Activated CD8-positive, alpha-beta T cell treated with anti-CD3 and anti-CD28 coated beads for 36 hours (primary cell): ENCODE measurements at regions of chr1 and their contacts with region 1.

Region 1: GRCh38 chr1:206982216-206982615 is 12.0 kb upstream of the FCAMR start:
- DNase-seq: peak; percentile 79
- ATAC-seq: peak; percentile 82
- H3K4me3 Mint-ChIP-seq: no peak overlapping the region
- H3K27ac Mint-ChIP-seq: no peak overlapping the region
- H3K4me1 Mint-ChIP-seq: no peaks in the 10 kb centered on the region
- H3K27me3 Mint-ChIP-seq: peaks cover 5% of the 10 kb centered on the region
- CTCF ChIP-seq: peak; percentile 78

Region 2: DNA sequence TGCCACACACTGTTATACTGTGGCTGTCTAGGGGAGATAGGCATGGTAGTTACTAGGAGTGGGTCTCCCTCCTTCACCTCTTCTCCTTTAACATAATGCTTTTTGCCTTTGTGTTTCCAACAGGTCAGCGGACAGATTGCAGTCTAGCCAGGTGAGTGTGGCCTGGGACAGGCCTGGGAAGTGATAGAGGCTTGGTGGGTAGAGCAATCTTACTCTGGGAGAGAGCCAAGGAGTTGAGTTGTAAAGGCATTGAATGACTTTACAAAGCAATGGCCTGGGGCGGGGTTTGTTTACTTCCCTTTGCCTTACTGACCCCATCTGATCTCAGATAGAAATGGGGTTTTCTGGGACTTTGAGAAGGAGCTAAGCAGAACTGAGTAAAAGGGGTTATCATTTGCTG is 563.0 kb before region 1 on chr1:
- CTCF ChIA-PET with region 1: no interaction called
- POLR2A ChIA-PET with region 1: no interaction called
- intact Hi-C with region 1: no loop called
- DNase-seq: no peak
- ATAC-seq: no peak
- H3K4me3 Mint-ChIP-seq: no peak overlapping the region
- H3K27ac Mint-ChIP-seq: no peak overlapping the region
- H3K4me1 Mint-ChIP-seq: no peaks in the 10 kb centered on the region
- H3K27me3 Mint-ChIP-seq: no peaks in the 10 kb centered on the region
- CTCF ChIP-seq: no peak

Region 3: GRCh38 chr1:206635080-206635977 is 346.9 kb before region 1 on chr1 and contains the start of gene DYRK3:
- CTCF ChIA-PET with region 1: interaction called, 15 read pairs
- POLR2A ChIA-PET with region 1: interaction called, 4 read pairs
- intact Hi-C with region 1: no loop called
- DNase-seq: peak; percentile 93
- ATAC-seq: peak; percentile 93
- H3K4me3 Mint-ChIP-seq: peak within 1 kb of the TSS; percentile 78
- H3K27ac Mint-ChIP-seq: peak within 1 kb of the TSS; percentile 88
- H3K4me1 Mint-ChIP-seq: peaks cover 25% of the 10 kb centered on the region
- H3K27me3 Mint-ChIP-seq: peaks cover 28% of the 10 kb centered on the region
- CTCF ChIP-seq: no peak
- total RNA-seq, gene DYRK3: 4.7 to 4.9 TPM

Region 4: DNA sequence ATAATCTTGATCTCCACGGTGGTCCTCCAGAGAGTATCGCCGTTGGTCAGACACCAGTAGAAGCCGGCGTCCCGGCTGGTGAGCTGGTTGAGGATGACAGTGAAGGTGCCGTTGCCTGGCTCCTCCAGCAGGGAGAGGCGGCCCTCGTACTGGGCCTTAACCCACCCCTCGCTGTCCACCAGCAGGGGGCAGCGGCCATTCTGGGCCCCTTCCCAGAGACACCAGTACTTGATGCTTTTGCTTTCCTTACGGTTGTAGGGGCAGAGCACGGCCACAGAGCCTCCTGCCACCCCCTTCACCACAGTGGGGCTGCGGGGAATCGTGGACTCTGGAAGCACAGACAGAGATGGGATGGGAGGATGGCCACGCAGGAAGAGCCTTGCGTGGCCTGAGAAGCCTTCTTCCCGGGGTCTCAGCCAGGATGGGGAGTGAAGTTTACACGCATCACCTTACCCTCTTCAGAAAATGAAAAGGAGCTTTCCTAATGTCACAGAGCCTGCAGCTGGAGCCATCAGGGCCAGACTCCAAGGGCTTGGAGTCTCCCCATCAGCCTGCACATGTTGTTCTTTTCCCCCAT is 46.6 kb before region 1 on chr1:
- CTCF ChIA-PET with region 1: interaction called, 182 read pairs
- POLR2A ChIA-PET with region 1: interaction called, 4 read pairs
- intact Hi-C with region 1: loop called (anchors 5 kb)
- DNase-seq: peak; percentile 71
- ATAC-seq: peak; percentile 58
- H3K4me3 Mint-ChIP-seq: no peak overlapping the region
- H3K27ac Mint-ChIP-seq: no peak overlapping the region
- H3K4me1 Mint-ChIP-seq: peaks cover 24% of the 10 kb centered on the region
- H3K27me3 Mint-ChIP-seq: no peaks in the 10 kb centered on the region
- CTCF ChIP-seq: peak; percentile 75

Region 5: DNA sequence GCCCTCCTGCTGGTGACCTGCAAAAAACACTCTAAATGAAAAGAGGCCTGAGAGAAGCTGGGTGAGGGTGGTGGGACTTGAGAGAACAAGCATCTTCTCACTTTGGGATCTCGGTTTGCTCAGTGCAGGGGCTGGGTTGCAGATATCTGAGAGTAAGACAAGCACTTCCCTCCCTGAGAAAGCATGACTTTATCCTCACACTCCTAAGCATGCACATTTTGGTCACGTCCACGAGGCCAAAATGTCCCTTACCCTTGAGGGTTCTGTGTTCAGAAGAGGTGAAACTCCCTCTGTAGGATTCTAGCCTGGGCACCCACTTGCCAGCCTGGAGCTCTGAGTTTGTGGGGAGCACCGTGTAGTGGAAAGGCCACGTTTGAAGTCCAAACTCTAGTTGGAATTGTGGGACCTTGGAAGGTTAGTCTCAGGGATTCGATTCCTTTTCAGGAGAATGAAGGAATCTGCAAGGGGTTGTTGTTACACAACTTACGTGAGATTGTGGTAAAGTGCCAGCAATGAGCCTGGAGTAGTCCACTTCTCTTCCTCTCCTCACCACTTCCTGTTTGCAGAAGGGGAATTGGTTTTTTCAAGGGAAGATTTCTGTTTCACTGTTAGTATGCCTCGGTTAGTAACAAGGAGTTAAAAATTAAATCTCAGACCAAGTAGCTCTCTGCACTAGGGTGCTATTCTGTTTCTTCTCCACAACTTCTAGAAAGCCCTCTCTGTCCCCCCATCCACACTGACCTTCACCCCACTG is 14.9 kb before region 1 on chr1:
- CTCF ChIA-PET with region 1: interaction called, 33 read pairs
- POLR2A ChIA-PET with region 1: no interaction called
- intact Hi-C with region 1: no loop called
- DNase-seq: no peak
- ATAC-seq: no peak
- H3K4me3 Mint-ChIP-seq: no peak overlapping the region
- H3K27ac Mint-ChIP-seq: peak overlapping the region; percentile 11
- H3K4me1 Mint-ChIP-seq: peaks cover 31% of the 10 kb centered on the region
- H3K27me3 Mint-ChIP-seq: peaks cover 6% of the 10 kb centered on the region
- CTCF ChIP-seq: no peak

Region 6: GRCh38 chr1:207015791-207016190 is 33.6 kb after region 1 on chr1:
- CTCF ChIA-PET with region 1: interaction called, 12 read pairs
- POLR2A ChIA-PET with region 1: no interaction called
- intact Hi-C with region 1: no loop called
- DNase-seq: no peak
- ATAC-seq: peak; percentile 66
- H3K4me3 Mint-ChIP-seq: no peak overlapping the region
- H3K27ac Mint-ChIP-seq: no peak overlapping the region
- H3K4me1 Mint-ChIP-seq: peaks cover 6% of the 10 kb centered on the region
- H3K27me3 Mint-ChIP-seq: peaks cover 11% of the 10 kb centered on the region
- CTCF ChIP-seq: no peak

Region 7: DNA sequence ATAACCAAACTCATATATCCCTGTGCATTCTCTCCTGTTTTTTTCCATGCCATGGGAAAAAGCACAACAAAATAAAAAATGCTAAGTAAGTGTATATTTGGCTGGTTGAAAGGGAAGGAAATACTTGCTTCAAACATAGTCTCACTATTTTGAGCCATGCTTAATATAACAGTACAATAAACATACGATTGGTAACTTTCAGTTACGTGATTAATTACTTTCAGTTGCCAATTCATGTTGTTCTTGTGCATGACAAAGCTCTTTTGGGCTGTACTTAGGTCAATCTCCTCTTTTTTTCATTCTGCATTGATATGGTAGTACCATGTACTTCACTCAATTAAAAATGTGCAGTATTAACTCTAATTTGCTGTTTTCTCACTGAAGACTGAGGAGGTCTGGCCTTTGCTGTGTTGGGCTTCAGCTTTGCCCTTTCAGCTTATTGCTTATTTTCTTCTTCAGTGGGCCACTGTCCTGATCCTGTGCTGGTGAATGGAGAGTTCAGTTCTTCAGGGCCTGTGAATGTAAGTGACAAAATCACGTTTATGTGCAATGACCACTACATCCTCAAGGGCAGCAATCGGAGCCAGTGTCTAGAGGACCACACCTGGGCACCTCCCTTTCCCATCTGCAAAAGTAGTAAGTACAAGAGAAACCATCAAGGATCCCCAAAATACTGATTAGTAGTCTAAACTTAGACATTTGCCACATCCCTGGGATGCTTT is 109.1 kb after region 1 on chr1:
- CTCF ChIA-PET with region 1: no interaction called
- POLR2A ChIA-PET with region 1: no interaction called
- intact Hi-C with region 1: no loop called
- DNase-seq: no peak
- ATAC-seq: no peak
- H3K4me3 Mint-ChIP-seq: no peak overlapping the region
- H3K27ac Mint-ChIP-seq: no peak overlapping the region
- H3K4me1 Mint-ChIP-seq: peaks cover 16% of the 10 kb centered on the region
- H3K27me3 Mint-ChIP-seq: peaks cover 3% of the 10 kb centered on the region
- CTCF ChIP-seq: no peak

Region 8: DNA sequence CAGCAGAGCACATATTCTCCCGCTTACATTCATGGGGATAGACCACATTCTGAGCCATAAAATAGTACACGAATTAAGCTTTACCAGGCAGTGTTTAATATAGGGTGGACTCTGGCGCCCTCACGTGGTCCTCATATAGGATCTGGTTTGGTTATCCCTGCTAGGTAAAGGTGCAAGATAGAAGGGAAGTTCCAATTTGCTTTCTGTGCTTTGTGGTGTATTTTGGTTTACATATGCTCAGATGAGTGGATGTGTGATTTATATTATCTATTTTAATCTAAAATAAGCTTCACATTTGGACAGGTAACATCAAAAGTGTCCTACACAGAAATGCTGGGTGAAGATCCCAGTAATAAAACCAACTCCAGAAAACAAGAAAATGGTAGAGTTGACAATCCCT is 517.4 kb after region 1 on chr1:
- CTCF ChIA-PET with region 1: interaction called, 12 read pairs
- POLR2A ChIA-PET with region 1: no interaction called
- intact Hi-C with region 1: no loop called
- DNase-seq: peak; percentile 93
- ATAC-seq: peak; percentile 71
- H3K4me3 Mint-ChIP-seq: no peak overlapping the region
- H3K27ac Mint-ChIP-seq: peak overlapping the region; percentile 62
- H3K4me1 Mint-ChIP-seq: peaks cover 25% of the 10 kb centered on the region
- H3K27me3 Mint-ChIP-seq: peaks cover 14% of the 10 kb centered on the region
- CTCF ChIP-seq: peak; percentile 92